Prostate gland (tissue), 2 donors: ENCODE measurements at regions of chr10 and their contacts with region 1.

Region 1: GRCh38 chr10:71285180-71285545 is 33.9 kb upstream of the SLC29A3 start:
- DNase-seq: peak; percentile 17
- H3K4me3 ChIP-seq: no peak overlapping the region
- H3K27ac ChIP-seq: no peak overlapping the region
- H3K4me1 ChIP-seq: no peaks in the 10 kb centered on the region
- H3K27me3 ChIP-seq: no peaks in the 10 kb centered on the region
- CTCF ChIP-seq: peak; percentile 60 to 84 (median 76)
- POLR2A ChIP-seq: no peak

Region 2: GRCh38 chr10:70903262-70903921 is 381.8 kb before region 1 on chr10:
- intact Hi-C with region 1: loop called (anchors 5 kb)
- DNase-seq: peak; percentile 46
- H3K4me3 ChIP-seq: no peak overlapping the region
- H3K27ac ChIP-seq: no peak overlapping the region
- H3K4me1 ChIP-seq: no peaks in the 10 kb centered on the region
- H3K27me3 ChIP-seq: no peaks in the 10 kb centered on the region
- CTCF ChIP-seq: peak; percentile 60 to 84 (median 74)
- POLR2A ChIP-seq: no peak

Region 3: DNA sequence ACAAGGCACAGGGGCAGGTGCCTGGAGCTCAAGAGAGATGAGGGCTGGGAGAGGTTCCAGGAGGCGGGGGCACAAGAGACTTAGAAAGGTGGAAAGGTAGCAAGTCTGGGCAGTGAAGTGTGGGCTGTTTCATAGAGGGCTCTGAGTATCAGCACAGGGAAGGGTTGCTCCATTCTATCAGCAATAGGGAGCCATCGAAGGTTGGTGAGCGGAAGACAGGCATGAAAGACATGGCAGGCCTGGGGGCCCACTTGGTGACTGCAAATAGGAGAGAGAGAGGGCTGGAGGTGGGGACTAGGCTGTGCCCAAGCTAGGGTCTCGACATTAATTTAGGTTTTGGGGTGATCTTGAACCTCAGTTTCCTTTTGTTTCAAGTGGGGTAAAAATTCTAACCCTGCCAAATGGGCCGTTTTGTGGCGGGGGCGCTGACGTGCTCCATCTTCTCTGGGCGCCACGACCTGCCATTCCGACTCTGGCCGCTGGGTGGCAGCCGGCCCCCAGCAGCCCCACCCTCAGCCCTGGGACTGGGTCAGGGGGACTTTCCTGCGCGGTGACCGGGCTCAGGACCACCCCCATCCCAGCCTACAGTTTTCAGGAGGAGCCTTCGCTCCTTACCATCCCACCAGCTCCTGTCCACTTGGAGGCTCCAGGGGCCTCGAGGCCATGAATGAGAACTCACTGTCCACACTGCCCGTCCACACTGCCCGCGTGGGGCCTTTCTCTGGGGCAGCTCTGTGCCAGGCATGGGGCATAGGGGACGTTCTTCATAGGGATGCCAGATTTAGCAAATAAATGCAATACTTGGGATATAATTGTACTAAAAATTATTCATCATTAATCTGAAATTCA is 359.6 kb before region 1 on chr10:
- intact Hi-C with region 1: loop called (anchors 2 kb)
- DNase-seq: peak; percentile 23
- H3K4me3 ChIP-seq: no peak overlapping the region
- H3K27ac ChIP-seq: no peak overlapping the region
- H3K4me1 ChIP-seq: no peaks in the 10 kb centered on the region
- H3K27me3 ChIP-seq: no peaks in the 10 kb centered on the region
- CTCF ChIP-seq: peak; percentile 91 to 93 (median 91)
- POLR2A ChIP-seq: no peak

Region 4: GRCh38 chr10:70952401-70952800 is 332.8 kb before region 1 on chr10:
- intact Hi-C with region 1: no loop called
- DNase-seq: no peak
- H3K4me3 ChIP-seq: no peak overlapping the region
- H3K27ac ChIP-seq: no peak overlapping the region
- H3K4me1 ChIP-seq: no peaks in the 10 kb centered on the region
- H3K27me3 ChIP-seq: no peaks in the 10 kb centered on the region
- CTCF ChIP-seq: no peak
- POLR2A ChIP-seq: no peak

Region 5: DNA sequence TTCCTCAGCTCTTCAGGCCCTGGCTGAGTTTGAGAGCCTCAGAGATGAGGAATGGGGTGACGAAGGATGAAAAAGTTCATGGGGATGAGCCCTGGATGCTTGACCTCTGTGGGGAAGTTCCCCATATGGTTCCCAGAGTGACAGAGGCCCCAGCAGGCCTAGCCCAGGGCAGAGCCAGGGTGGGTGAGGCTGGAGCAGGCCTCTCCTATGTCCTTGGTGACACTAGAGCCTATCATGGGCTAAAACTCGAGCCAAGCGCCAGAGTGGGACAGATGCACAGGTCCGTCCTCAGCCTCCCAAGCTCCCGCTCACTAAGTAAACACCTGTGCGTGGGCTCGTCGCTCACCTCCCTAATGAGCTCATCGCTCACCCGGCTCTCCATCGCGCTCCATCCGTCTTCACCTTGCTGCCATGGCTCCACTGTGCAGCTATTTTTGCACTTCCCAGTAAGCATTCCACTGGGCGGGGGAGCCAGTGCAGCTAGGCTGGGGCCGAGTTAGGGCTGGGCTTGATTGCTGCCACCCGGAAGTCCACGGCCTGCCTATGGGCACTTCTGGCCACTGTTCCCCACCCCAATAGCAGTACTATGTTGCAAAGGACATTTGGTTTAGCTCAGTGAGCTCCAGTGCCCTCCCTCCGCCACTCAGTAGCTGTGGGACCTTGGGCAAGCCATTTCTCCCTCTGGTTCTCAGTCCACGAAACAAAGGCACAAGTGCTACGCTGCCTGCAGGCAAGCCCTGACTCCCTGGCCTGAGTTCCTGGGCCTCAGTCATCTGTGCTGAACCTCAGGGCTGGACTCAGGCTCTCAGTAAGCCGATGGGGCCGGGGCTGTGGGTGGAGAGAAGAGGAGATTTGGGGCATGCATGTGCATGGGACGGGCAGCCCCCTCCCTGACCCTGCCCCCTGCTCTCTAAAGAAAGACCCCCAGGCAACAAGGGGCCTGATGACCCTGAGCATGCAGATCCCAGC is 279.5 kb before region 1 on chr10:
- intact Hi-C with region 1: no loop called
- DNase-seq: no peak
- H3K4me3 ChIP-seq: no peak overlapping the region
- H3K27ac ChIP-seq: no peak overlapping the region
- H3K4me1 ChIP-seq: no peaks in the 10 kb centered on the region
- H3K27me3 ChIP-seq: no peaks in the 10 kb centered on the region
- CTCF ChIP-seq: no peak
- POLR2A ChIP-seq: no peak